ENCODE measurements at regions of chr9 and their contacts with region 1.

Region 1: GRCh38 chr9:134983074-134983473 is 65.4 kb upstream of the FCN1 start:
- H3K4me3 Mint-ChIP-seq: no peak overlapping the region
- H3K27ac Mint-ChIP-seq: no peak overlapping the region
- H3K4me1 Mint-ChIP-seq: peaks cover 32% of the 10 kb centered on the region
- H3K27me3 Mint-ChIP-seq: peaks cover 48% of the 10 kb centered on the region

Region 2: DNA sequence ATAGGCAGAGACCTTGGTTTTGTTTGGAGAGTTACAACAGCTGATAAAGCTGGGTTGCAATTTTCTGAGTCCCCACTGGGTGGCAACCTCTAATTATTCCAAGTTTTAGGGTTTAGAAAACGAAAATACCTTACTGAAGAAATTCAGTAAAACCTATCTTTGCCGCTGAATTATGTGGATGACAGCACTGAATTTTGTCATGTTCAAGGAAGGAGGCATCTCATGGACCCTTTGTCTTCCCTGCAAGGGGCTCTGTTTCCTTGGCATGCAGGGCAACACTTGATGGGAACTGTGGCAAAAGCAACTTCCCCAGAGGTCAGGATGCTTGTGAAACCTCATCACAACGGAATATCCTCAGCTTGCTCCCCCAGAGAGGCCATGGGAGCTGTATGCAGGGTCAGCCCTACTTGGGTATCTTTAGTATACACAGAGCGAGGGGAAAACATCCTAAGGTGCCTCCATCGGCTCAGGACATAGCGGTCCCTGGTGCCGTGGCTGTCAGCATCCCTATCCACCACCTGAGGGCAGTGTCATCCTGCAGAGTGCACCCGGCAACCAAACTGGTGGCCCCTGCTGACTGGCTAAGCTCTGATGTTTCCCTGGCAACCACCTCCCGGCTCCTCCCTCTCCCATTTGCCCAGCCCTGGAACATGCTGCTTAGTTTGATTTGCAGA is 533.7 kb before region 1 on chr9:
- intact Hi-C with region 1: loop called (anchors 5 kb)
- H3K4me3 Mint-ChIP-seq: no peak overlapping the region
- H3K27ac Mint-ChIP-seq: no peak overlapping the region
- H3K4me1 Mint-ChIP-seq: peaks cover 12% of the 10 kb centered on the region
- H3K27me3 Mint-ChIP-seq: peaks cover 42% of the 10 kb centered on the region

Region 3: DNA sequence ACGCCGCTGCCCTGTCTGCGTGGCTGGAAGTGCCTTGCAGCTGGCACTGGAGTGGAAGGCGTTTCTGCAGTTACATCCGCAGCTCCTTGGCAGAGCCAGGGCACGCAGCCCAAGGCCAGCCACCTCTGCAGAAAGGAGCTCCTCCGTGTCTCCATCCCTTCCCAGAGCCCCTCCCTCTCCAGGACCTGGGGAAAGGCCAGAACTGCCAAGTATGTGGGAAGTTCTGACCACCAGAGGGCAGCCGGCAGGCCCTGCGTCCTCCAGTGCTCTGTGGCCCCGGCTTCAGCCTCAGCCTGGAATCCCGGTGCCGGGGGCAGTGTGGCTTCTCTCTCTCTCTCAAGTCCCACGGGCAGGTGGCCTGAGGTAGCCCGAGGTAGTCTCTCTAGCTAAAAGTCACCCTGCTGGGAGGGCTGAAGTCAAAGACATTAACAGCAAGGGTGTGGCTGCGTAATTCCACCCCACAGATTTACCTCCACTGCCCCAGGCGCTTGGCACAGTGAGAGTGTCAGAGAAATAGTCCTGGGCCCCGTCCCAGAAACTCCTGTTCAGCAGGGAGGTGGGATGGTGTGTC is 204.1 kb before region 1 on chr9:
- intact Hi-C with region 1: loop called (anchors 1 kb)
- H3K4me3 Mint-ChIP-seq: no peak overlapping the region
- H3K27ac Mint-ChIP-seq: no peak overlapping the region
- H3K4me1 Mint-ChIP-seq: peaks cover 5% of the 10 kb centered on the region
- H3K27me3 Mint-ChIP-seq: peaks cover 75% of the 10 kb centered on the region

Region 4: GRCh38 chr9:135379540-135380267 is 396.6 kb after region 1 on chr9:
- intact Hi-C with region 1: no loop called
- H3K4me3 Mint-ChIP-seq: no peak overlapping the region
- H3K27ac Mint-ChIP-seq: no peak overlapping the region
- H3K4me1 Mint-ChIP-seq: no peaks in the 10 kb centered on the region
- H3K27me3 Mint-ChIP-seq: no peaks in the 10 kb centered on the region

Measured in dendritic cell treated with granulocyte-macrophage colony-stimulating factor and Interleukin-4, amounts not matched to agents 40 ng/mL and 50 ng/mL, for 4 days (primary cell).